Mammary epithelial cell (primary cell): ENCODE measurements at regions of chr12 and their contacts with region 1.

Region 1: DNA sequence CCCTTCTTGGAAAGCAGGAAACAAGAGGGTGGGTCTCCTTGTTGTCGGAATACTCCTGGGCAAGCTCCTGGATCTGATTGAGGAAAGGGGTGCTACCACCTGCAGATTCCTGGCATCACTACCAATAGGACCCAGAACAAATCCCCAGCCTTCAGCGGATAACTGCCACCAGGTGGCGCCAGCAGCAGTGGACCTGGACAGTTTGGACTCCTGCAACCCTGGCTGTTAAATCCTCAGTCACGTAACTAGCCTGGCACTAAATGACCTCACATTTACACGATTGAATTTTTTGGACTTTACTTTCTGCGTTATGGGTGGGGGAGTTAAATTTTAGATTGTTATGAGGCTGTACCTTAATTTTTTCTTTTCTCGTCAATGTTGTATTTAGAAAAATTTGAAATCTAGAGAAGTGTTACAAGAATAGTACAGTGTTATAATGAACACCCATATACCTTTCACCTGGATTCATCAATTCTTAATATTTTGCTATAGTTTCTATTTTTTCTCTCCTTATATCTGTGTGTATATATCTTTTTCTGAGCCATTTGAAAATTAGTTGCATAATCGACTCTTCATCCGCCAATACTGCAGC is 95.6 kb downstream of the GAS2L3 start:
- DNase-seq: peak; percentile 56
- H3K4me3 ChIP-seq: no peak overlapping the region
- H3K27ac ChIP-seq: no peak overlapping the region
- H3K4me1 ChIP-seq: no peaks in the 10 kb centered on the region
- H3K27me3 ChIP-seq: no peaks in the 10 kb centered on the region
- CTCF ChIP-seq: peak; percentile 82 to 96

Region 2: GRCh38 chr12:100733817-100734593 is 65.0 kb after region 1 on chr12:
- CTCF ChIA-PET with region 1: no interaction called
- dilution Hi-C with region 1: no loop called
- in situ Hi-C with region 1: loop called (anchors 5 kb)
- intact Hi-C with region 1: loop called (anchors 1 kb)
- DNase-seq: peak; percentile 24
- H3K4me3 ChIP-seq: no peak overlapping the region
- H3K27ac ChIP-seq: no peak overlapping the region
- H3K4me1 ChIP-seq: no peaks in the 10 kb centered on the region
- H3K27me3 ChIP-seq: no peaks in the 10 kb centered on the region
- CTCF ChIP-seq: peak; percentile 58 to 73

Region 3: GRCh38 chr12:100741084-100741711 is 72.2 kb after region 1 on chr12:
- CTCF ChIA-PET with region 1: no interaction called
- dilution Hi-C with region 1: no loop called
- in situ Hi-C with region 1: no loop called
- intact Hi-C with region 1: loop called (anchors 1 kb)
- DNase-seq: peak; percentile 26
- H3K4me3 ChIP-seq: no peak overlapping the region
- H3K27ac ChIP-seq: no peak overlapping the region
- H3K4me1 ChIP-seq: no peaks in the 10 kb centered on the region
- H3K27me3 ChIP-seq: no peaks in the 10 kb centered on the region
- CTCF ChIP-seq: peak; percentile 74 to 83

Region 4: GRCh38 chr12:100858656-100859055 is 189.6 kb after region 1 on chr12:
- CTCF ChIA-PET with region 1: no interaction called
- dilution Hi-C with region 1: no loop called
- in situ Hi-C with region 1: no loop called
- intact Hi-C with region 1: no loop called
- DNase-seq: peak; percentile 50
- H3K4me3 ChIP-seq: no peak overlapping the region
- H3K27ac ChIP-seq: no peak overlapping the region
- H3K4me1 ChIP-seq: no peaks in the 10 kb centered on the region
- H3K27me3 ChIP-seq: no peaks in the 10 kb centered on the region
- CTCF ChIP-seq: no peak

Region 5: GRCh38 chr12:101021909-101022388 is 352.9 kb after region 1 on chr12:
- CTCF ChIA-PET with region 1: no interaction called
- dilution Hi-C with region 1: no loop called
- in situ Hi-C with region 1: no loop called
- intact Hi-C with region 1: no loop called
- DNase-seq: peak; percentile 79
- H3K4me3 ChIP-seq: no peak overlapping the region
- H3K27ac ChIP-seq: peak overlapping the region; percentile 97
- H3K4me1 ChIP-seq: peaks cover 49% of the 10 kb centered on the region
- H3K27me3 ChIP-seq: no peaks in the 10 kb centered on the region
- CTCF ChIP-seq: no peak